Sigmoid colon (tissue), 7 donors: ENCODE measurements at regions of chr3 and their contacts with region 1.

Region 1: GRCh38 chr3:115092220-115092791 is 54.8 kb downstream of the ZBTB20 start:
- DNase-seq: peak; percentile 84
- H3K4me3 ChIP-seq: no peak overlapping the region
- H3K27ac ChIP-seq: peak overlapping the region in 1 of 4 donors; percentile 27
- H3K4me1 ChIP-seq: peaks cover 0 to 44% (median 19%) of the 10 kb centered on the region in 4 donors
- H3K27me3 ChIP-seq: no peaks in the 10 kb centered on the region
- CTCF ChIP-seq: peak; percentile 65 to 84 (median 74)
- EP300 ChIP-seq: no peak
- POLR2A ChIP-seq: no peak

Region 2: DNA sequence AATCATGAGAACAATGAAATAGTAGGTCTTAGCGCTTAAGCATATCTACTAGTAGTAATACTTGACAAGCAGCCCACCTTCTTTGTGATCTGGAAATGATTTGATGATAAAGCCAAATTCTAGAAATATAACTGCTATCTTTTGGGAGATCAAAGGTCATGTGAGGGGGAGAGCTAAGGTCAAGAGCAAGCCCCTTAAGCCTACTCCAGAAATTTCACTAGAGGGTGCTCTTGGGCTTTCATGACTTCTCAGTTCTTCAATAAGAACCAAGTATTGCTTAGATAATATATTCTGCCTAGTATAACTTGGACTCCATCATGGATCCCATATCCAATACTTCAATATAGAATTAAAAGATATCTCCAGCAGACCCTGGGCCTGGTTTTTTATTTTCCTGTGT is 264.8 kb before region 1 on chr3:
- intact Hi-C with region 1: loop called (anchors 5 kb)
- DNase-seq: no peak
- H3K4me3 ChIP-seq: no peak overlapping the region
- H3K27ac ChIP-seq: no peak overlapping the region
- H3K4me1 ChIP-seq: peaks cover 0 to 4% (median 0%) of the 10 kb centered on the region in 4 donors
- H3K27me3 ChIP-seq: no peaks in the 10 kb centered on the region
- CTCF ChIP-seq: peak in 3 of 4 experiments; percentile 19 to 56 (median 32)
- EP300 ChIP-seq: no peak
- POLR2A ChIP-seq: no peak

Region 3: DNA sequence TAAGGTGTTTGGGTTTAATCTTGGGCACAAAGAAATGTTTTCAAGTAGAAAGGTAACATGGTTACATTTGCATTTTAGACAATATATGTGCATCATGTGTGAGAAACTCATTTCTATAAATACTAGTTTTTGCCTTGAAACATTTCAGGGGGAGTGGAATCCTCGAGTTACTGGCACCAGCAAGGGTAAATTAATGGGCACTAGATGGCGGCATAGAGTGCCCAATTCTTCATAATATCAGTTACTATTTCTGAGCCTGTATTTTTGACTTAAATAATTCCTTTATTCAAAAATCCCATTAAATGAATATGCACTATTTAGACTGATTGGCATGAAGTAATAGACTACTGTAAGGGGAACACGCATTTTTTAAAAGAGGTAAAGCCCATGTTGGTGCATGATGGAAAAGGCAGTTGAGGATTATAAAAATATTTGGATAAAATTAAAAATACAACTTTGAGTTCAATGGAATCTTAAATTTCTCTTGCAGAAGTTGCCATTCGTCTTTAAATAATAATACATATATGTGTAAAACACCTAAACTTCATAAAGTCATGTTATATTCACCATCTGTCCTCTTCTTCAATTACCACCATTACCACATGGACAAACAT is 51.5 kb before region 1 on chr3:
- intact Hi-C with region 1: loop called (anchors 5 kb)
- DNase-seq: no peak
- H3K4me3 ChIP-seq: no peak overlapping the region
- H3K27ac ChIP-seq: no peak overlapping the region
- H3K4me1 ChIP-seq: peaks cover 0 to 10% (median 2%) of the 10 kb centered on the region in 4 donors
- H3K27me3 ChIP-seq: no peaks in the 10 kb centered on the region
- CTCF ChIP-seq: peak in 1 of 4 experiments; percentile 43
- EP300 ChIP-seq: no peak
- POLR2A ChIP-seq: no peak

Region 4: GRCh38 chr3:115369021-115369420 is 276.7 kb after region 1 on chr3:
- intact Hi-C with region 1: no loop called
- DNase-seq: no peak
- H3K4me3 ChIP-seq: no peak overlapping the region
- H3K27ac ChIP-seq: no peak overlapping the region
- H3K4me1 ChIP-seq: no peaks in the 10 kb centered on the region
- H3K27me3 ChIP-seq: no peaks in the 10 kb centered on the region
- CTCF ChIP-seq: no peak
- EP300 ChIP-seq: no peak
- POLR2A ChIP-seq: no peak

Region 5: DNA sequence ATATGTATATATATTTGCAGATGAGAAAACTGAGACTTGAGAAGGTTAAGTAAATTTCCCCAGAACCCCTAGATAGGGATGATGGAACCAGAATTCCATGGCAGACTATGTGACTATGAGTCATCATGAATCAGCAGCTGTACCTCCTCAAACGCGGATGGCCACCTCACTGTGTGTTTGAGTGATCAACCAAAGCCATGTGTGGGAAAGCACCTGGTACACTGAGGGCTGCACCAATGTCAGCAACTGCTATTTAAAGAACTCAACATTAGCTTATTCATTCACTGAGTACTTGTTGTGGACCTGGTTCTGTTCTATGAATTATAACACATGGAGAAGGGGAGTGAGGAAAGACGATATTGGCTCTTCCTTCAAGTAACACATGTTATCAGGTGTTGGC is 908.0 kb after region 1 on chr3:
- intact Hi-C with region 1: no loop called
- DNase-seq: peak; percentile 62
- H3K4me3 ChIP-seq: no peak overlapping the region
- H3K27ac ChIP-seq: peak overlapping the region in 1 of 4 donors; percentile 6
- H3K4me1 ChIP-seq: peaks cover 0 to 23% (median 11%) of the 10 kb centered on the region in 4 donors
- H3K27me3 ChIP-seq: no peaks in the 10 kb centered on the region
- CTCF ChIP-seq: no peak
- EP300 ChIP-seq: no peak
- POLR2A ChIP-seq: no peak